ENCODE measurements at regions of chr3 and their contacts with region 1.

Region 1: GRCh38 chr3:14231998-14232501 is 53.4 kb downstream of the LSM3 start:
- DNase-seq: no peak
- ATAC-seq: no peak
- H3K4me3 ChIP-seq: no peak overlapping the region
- H3K27ac ChIP-seq: peak overlapping the region; percentile 90
- H3K4me1 ChIP-seq: peaks cover 38 to 66% of the 10 kb centered on the region in 2 experiments
- H3K27me3 ChIP-seq: no peaks in the 10 kb centered on the region
- CTCF ChIP-seq: no peak
- EP300 ChIP-seq: no peak
- POLR2A ChIP-seq: no peak
- RAD21 ChIP-seq: no peak

Region 2: GRCh38 chr3:14178247-14179113 is 53.6 kb before region 1 on chr3 and contains the starts of genes LSM3 and XPC:
- CTCF ChIA-PET with region 1: no interaction called
- POLR2A ChIA-PET with region 1: interaction called, 5 read pairs
- in situ Hi-C with region 1: no loop called
- intact Hi-C with region 1: loop called (anchors 1 kb)
- DNase-seq: peak; percentile 95 to 99 (median 96)
- ATAC-seq: peak; percentile 96
- H3K4me3 ChIP-seq: peak within 1 kb of the TSS; percentile 65
- H3K27ac ChIP-seq: peak within 1 kb of the TSS; percentile 89
- H3K4me1 ChIP-seq: peaks cover 13 to 41% of the 10 kb centered on the region in 2 experiments
- H3K27me3 ChIP-seq: no peaks in the 10 kb centered on the region
- CTCF ChIP-seq: peak in 2 of 3 experiments; percentile 1 to 19; a peak in 1 of 6 replicates
- EP300 ChIP-seq: no peak
- POLR2A ChIP-seq: peak; percentile 98
- RAD21 ChIP-seq: no peak
- polyA plus RNA-seq, gene LSM3: 180 to 203 TPM
- polyA plus RNA-seq, gene XPC: 3.8 to 4.1 TPM

Region 3: DNA sequence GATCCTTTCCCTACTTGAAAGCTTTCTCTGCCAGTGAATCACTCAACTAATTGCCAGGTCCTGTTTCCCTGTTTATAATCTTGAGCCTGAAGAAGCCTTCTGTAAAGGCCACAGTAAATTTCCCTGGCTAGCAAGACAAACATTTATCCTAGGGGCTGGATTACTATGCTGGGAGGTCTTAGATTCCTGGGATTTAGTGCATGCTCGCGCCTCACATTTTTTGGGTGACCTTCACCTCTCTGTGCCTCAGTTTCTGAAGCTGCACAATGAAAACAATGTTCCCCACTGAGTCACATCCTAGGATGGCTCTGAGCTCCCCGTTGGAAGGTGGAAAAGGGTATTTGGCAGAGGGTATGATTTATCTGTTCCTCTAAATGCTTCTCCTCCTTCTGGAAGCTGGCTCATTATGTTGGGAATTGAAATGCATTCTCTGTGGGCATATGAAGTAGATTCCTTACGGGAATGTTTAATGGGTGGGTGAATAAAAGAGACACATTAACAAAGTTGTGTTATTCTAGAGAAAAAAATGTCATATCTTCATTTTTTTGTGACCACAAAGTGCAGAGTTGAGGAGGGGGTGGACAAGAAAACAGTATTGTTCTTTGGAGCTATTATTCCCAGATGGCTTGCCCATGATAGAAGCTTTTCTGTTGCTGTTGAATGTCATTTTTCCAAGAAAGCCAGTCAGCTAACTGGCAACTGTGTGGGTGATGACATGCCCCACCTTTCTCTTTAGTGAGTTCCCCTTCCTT is 21.0 kb before region 1 on chr3:
- CTCF ChIA-PET with region 1: interaction called, 3 read pairs
- POLR2A ChIA-PET with region 1: interaction called, 22 read pairs
- in situ Hi-C with region 1: no loop called
- intact Hi-C with region 1: no loop called
- DNase-seq: no peak
- ATAC-seq: no peak
- H3K4me3 ChIP-seq: no peak overlapping the region
- H3K27ac ChIP-seq: peak overlapping the region; percentile 18; the same call in 1 of the 3 replicates
- H3K4me1 ChIP-seq: peaks cover 32 to 61% of the 10 kb centered on the region in 2 experiments
- H3K27me3 ChIP-seq: no peaks in the 10 kb centered on the region
- CTCF ChIP-seq: no peak
- EP300 ChIP-seq: no peak; the same call in 1 of the 2 replicates
- POLR2A ChIP-seq: no peak
- RAD21 ChIP-seq: no peak

Region 4: GRCh38 chr3:14242490-14243311 is 10.7 kb after region 1 on chr3:
- CTCF ChIA-PET with region 1: no interaction called
- POLR2A ChIA-PET with region 1: interaction called, 11 read pairs
- in situ Hi-C with region 1: no loop called
- intact Hi-C with region 1: no loop called
- DNase-seq: no peak
- ATAC-seq: peak; percentile 43
- H3K4me3 ChIP-seq: no peak overlapping the region
- H3K27ac ChIP-seq: peak overlapping the region; percentile 29; the same call in 2 of the 3 replicates
- H3K4me1 ChIP-seq: peaks cover 9 to 13% of the 10 kb centered on the region in 2 experiments; a peak in 4 of 5 replicates
- H3K27me3 ChIP-seq: no peaks in the 10 kb centered on the region
- CTCF ChIP-seq: no peak
- EP300 ChIP-seq: no peak
- POLR2A ChIP-seq: no peak
- RAD21 ChIP-seq: no peak

Region 5: GRCh38 chr3:14253022-14253706 is 21.1 kb after region 1 on chr3:
- CTCF ChIA-PET with region 1: no interaction called
- POLR2A ChIA-PET with region 1: interaction called, 12 read pairs
- in situ Hi-C with region 1: no loop called
- intact Hi-C with region 1: loop called (anchors 2 kb)
- DNase-seq: peak in 1 of 4 experiments; percentile 50
- ATAC-seq: peak; percentile 50
- H3K4me3 ChIP-seq: no peak overlapping the region; the same call in 1 of the 2 replicates
- H3K27ac ChIP-seq: peak overlapping the region; percentile 63
- H3K4me1 ChIP-seq: peaks cover 57 to 76% of the 10 kb centered on the region in 2 experiments
- H3K27me3 ChIP-seq: no peaks in the 10 kb centered on the region
- CTCF ChIP-seq: no peak
- EP300 ChIP-seq: no peak
- POLR2A ChIP-seq: no peak
- RAD21 ChIP-seq: no peak

Measured in K562 (cell line).